Heart right ventricle (tissue), 16 donors: ENCODE measurements at regions of chr14 and their contacts with region 1.

Region 1: GRCh38 chr14:57634340-57634739 is 140.7 kb upstream of the CCDC198 start:
- DNase-seq: no peak
- ATAC-seq: no peak
- H3K4me3 ChIP-seq: no peak overlapping the region
- H3K27ac ChIP-seq: no peak overlapping the region
- H3K4me1 ChIP-seq: no peaks in the 10 kb centered on the region
- H3K27me3 ChIP-seq: peaks cover 0 to 18% (median 0%) of the 10 kb centered on the region in 7 donors
- CTCF ChIP-seq: no peak

Region 2: GRCh38 chr14:57390028-57390805 is 244.1 kb before region 1 on chr14 and contains the start of gene NAA30:
- intact Hi-C with region 1: no loop called
- DNase-seq: peak; percentile 93 to 94
- ATAC-seq: peak; percentile 95 to 98 (median 97)
- H3K4me3 ChIP-seq: peak within 1 kb of the TSS; percentile 80 to 94 (median 90)
- H3K27ac ChIP-seq: peak within 1 kb of the TSS; percentile 38 to 92 (median 88)
- H3K4me1 ChIP-seq: peaks cover 3 to 45% (median 37%) of the 10 kb centered on the region in 9 donors
- H3K27me3 ChIP-seq: no peaks in the 10 kb centered on the region
- CTCF ChIP-seq: peak in 1 of 9 donors; percentile 25
- total RNA-seq, gene NAA30: 23.5 to 30.7 (median 27.1) TPM

Region 3: DNA sequence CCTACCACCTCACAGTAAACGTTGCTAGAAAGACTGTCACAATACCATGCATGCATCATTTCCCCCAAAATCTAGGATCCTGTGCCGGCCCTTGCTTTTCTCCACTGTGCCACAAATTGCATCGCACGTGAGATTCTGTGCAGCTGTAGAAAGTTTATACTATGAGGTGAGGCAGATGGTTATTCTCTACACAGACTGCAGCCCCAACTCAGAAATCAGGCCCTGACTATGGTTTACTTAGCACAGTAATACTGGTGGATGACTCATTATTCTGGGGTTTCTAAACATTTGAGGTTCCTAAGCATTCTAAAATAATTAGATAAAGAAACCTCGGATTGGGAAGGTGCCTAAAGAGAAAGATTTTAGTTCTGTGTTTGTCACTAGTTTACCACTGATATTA is 23.1 kb after region 1 on chr14:
- intact Hi-C with region 1: loop called in 1 of 10 experiments (anchors 2 kb)
- DNase-seq: no peak
- ATAC-seq: no peak
- H3K4me3 ChIP-seq: no peak overlapping the region
- H3K27ac ChIP-seq: no peak overlapping the region
- H3K4me1 ChIP-seq: no peaks in the 10 kb centered on the region
- H3K27me3 ChIP-seq: peaks cover 0 to 14% (median 0%) of the 10 kb centered on the region in 7 donors
- CTCF ChIP-seq: no peak